Left cardiac atrium (tissue), 4 donors: ENCODE measurements at regions of chr6 and their contacts with region 1.

Region 1: DNA sequence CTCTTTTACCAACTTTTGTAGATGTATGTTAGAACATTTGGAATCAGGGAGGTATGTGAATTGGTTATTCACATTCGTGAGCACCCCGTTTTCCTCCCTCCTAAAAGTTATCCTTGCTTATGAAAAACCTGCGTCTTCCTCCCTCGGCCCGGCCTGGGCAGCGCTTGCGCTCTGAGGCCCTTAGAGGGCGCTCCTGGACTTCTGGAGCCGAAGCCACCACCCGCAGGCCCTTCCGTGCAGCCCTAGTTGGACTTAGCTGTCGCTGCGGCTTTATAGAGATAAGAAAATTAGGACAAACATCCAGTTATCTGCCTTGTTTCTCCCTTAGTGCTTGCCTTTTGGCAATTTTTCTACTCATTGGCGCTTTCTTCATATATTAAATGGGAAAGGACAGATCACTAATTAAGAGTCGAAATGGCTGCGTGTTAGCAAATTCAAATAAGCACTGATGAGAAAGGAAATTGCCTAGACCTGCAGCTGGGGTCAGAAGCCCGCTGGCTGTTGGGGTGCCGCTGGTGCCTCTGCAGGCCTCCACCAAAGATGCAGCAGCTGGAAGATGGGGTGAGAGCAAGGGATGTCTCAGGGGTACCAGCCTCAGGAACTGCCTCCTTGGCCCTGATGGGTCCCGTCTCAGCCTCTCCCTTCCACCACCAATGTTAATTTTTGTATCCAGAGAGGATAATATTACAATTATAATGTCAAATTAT is 5.2 kb downstream of the FNDC1 start:
- DNase-seq: peak; percentile 72
- ATAC-seq: peak; percentile 82 to 89

Region 2: DNA sequence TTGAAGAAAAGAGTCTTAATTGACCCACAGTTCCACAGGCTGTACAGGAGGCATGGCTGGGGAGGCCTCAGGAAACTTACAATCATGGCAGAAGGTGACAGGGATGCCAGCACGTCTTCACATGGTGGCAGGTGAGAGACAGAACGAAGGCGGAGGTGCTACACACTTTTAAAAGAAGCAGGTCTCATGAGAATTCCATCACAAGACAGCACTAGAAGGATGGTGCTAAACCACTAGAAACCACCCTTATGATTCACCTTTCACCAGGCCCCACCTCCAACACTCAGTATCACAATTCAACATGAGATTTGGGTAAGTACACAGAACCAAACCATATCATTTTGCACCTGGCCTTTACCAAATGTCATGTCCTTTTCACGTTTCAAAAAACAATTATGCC is 150.5 kb before region 1 on chr6:
- intact Hi-C with region 1: no loop called
- DNase-seq: no peak
- ATAC-seq: no peak

Region 3: DNA sequence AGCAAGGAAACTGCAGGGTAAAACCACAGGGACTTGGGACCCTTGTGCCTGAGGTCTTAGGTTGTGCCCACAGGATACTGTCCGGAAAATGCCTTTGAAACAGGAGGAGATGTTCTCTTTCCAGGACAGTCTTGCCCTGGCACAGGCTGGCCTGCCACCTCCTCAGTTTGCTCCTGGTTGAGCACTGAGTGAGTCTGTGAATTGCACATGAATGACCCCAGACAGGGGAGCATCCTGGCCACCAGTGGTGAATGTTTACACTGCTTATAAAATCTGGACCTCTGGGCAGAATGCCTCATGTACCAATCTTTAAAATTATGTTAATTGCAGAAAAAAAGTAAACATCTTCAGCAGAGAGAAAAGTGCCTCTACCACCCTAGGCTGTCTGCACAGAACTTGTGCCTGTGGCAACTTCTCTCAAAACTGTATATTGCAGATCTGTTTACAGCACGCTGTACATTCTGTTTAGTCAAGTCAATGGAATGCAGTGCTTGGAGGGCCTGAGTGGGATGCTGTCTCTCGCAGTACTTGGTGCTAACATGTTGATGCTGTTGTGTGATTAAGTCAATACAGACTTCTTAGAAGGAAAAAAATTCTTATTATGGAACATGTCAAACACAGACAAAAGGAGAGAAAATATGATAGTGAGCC is 276.5 kb after region 1 on chr6:
- intact Hi-C with region 1: loop called in 1 of 2 experiments (anchors 10 kb)
- DNase-seq: no peak
- ATAC-seq: peak in 1 of 2 donors; percentile 51

Region 4: DNA sequence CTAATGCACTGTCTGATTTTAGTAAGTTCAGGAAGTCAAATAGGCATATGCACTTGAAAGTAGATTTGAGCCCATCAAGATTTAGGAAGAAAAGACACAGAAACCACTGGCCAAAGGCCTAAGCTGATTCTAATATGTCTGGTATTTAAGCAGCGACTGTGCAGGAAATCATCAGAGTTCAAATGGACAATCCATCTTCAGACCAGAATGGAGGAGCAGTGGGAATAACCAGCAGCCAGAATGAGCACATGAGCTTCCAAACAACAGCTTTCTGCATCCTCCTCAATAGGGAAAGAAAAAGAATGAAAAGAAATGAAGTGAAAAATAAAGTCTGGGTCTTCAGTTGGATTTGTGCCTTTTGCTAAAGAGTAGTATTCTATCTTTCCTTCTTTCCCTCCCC is 468.1 kb after region 1 on chr6:
- intact Hi-C with region 1: loop called in 1 of 2 experiments (anchors 5 kb)
- DNase-seq: no peak
- ATAC-seq: no peak

Region 5: GRCh38 chr6:159654483-159655098 is 480.2 kb after region 1 on chr6:
- intact Hi-C with region 1: loop called in 1 of 2 experiments (anchors 10 kb)
- DNase-seq: no peak
- ATAC-seq: peak in 1 of 2 donors; percentile 49